ENCODE measurements at regions of chr9 and their contacts with region 1.

Region 1: GRCh38 chr9:70852711-70853240 is 268.6 kb downstream of the TRPM3 start:
- DNase-seq: no peak
- ATAC-seq: no peak
- H3K4me3 Mint-ChIP-seq: no peak overlapping the region
- H3K27ac Mint-ChIP-seq: no peak overlapping the region
- H3K4me1 Mint-ChIP-seq: no peaks in the 10 kb centered on the region
- H3K27me3 Mint-ChIP-seq: no peaks in the 10 kb centered on the region

Region 2: DNA sequence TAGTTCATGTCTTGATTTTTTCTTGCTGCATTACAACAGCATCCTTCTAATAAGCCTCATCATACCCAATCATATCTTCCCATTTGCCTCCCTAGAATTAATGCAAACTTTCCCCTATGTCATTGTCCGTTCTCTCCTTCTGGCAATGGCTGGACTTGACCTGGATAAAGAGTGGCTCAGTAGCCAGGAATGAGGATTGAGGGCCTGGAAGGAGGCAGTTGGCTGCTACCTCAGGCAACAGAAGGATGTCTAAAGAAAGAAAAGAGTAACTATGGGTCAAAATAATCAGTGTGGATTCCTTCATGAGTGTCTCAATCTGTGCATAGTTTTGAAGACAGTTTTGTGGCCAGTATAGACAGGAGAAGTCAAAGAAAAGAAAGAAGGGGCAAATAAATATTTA is 59.0 kb after region 1 on chr9:
- CTCF ChIA-PET with region 1: no interaction called
- POLR2A ChIA-PET with region 1: no interaction called
- intact Hi-C with region 1: loop called in 1 of 2 experiments (anchors 10 kb)
- DNase-seq: no peak
- ATAC-seq: no peak
- H3K4me3 Mint-ChIP-seq: no peak overlapping the region
- H3K27ac Mint-ChIP-seq: no peak overlapping the region
- H3K4me1 Mint-ChIP-seq: no peaks in the 10 kb centered on the region
- H3K27me3 Mint-ChIP-seq: peaks cover 3% of the 10 kb centered on the region

Measured in activated CD4-positive, alpha-beta T cell treated with anti-CD3 and anti-CD28 coated beads for 36 hours (primary cell).